Dorsolateral prefrontal cortex (tissue), 120 donors: ENCODE measurements at regions of chr4 and their contacts with region 1.

Region 1: GRCh38 chr4:6443035-6444023 is 29.1 kb downstream of the PPP2R2C start:
- DNase-seq: peak in 4 of 10 donors; percentile 62 to 75 (median 66)
- H3K4me3 ChIP-seq: no peak overlapping the region
- H3K27ac ChIP-seq: peak overlapping the region in 22 of 59 donors; percentile 2 to 78 (median 36)
- H3K27me3 ChIP-seq: no peaks in the 10 kb centered on the region
- CTCF ChIP-seq: no peak

Region 2: GRCh38 chr4:6379767-6380745 is 63.3 kb before region 1 on chr4:
- intact Hi-C with region 1: loop called in 1 of 2 experiments (anchors 5 kb)
- DNase-seq: peak in 2 of 10 donors; percentile 23 to 32
- H3K4me3 ChIP-seq: no peak overlapping the region
- H3K27ac ChIP-seq: peak overlapping the region in 18 of 59 donors; percentile 5 to 65 (median 22)
- H3K27me3 ChIP-seq: no peaks in the 10 kb centered on the region
- CTCF ChIP-seq: no peak

Region 3: DNA sequence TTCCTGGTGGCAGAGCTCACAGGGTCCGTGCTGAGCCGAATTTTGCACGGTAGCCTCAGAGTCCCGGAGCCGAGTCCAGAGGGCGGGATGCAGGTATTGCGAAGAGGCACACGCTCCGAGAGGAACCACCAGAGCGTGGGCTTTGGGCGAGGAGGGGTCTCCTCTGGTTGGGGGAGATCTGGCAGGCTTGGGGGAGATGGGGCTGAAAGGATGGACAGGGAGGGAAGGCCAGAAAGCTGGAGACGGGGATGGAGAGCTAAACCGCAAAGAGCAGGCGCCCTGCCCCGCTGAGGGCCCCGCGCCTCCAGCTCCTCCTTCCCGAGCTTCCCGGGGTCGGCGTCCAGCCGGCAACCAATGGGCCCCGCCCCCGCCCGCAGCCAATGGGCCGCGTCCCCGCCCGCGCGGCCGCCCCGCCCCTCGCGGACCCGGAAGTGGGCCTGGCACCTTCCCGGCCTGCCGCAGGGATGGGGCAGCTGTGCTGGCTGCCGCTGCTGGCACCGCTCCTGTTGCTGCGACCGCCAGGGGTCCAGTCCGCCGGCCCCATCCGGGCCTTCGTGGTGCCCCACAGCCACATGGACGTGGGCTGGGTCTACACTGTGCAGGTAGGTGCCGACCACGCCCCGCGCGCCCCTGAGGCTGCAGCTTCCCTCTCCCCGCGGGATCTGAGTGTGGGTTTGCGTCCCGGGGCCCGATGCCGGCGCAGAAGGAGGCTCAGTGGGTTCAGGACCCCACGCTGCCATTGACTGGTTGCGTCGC is 131.6 kb after region 1 on chr4 and contains the start of gene MAN2B2:
- intact Hi-C with region 1: no loop called
- DNase-seq: peak; percentile 81 to 96 (median 86)
- H3K4me3 ChIP-seq: peak within 1 kb of the TSS; percentile 63 to 100 (median 87)
- H3K27ac ChIP-seq: peak within 1 kb of the TSS; percentile 9 to 95 (median 86)
- H3K27me3 ChIP-seq: no peaks in the 10 kb centered on the region
- CTCF ChIP-seq: peak in 31 of 56 donors; percentile 11 to 58 (median 26)
- total RNA-seq, gene MAN2B2: 22.1 to 45.0 (median 34.3) TPM

Region 4: GRCh38 chr4:6806924-6807636 is 363.8 kb after region 1 on chr4:
- intact Hi-C with region 1: no loop called
- DNase-seq: no peak
- H3K4me3 ChIP-seq: no peak overlapping the region
- H3K27ac ChIP-seq: peak overlapping the region in 21 of 59 donors; percentile 3 to 58 (median 40)
- H3K27me3 ChIP-seq: no peaks in the 10 kb centered on the region
- CTCF ChIP-seq: no peak